PC-9 (cell line): ENCODE measurements at regions of chr12 and their contacts with region 1.

Region 1: GRCh38 chr12:104121001-104121400 is 17.0 kb downstream of the NFYB start:
- DNase-seq: peak in 1 of 2 experiments; percentile 81
- H3K4me3 ChIP-seq: no peak overlapping the region
- H3K27ac ChIP-seq: peak overlapping the region; percentile 27; the same call in 1 of the 2 replicates
- H3K4me1 ChIP-seq: peaks cover 24% of the 10 kb centered on the region
- H3K27me3 ChIP-seq: no peaks in the 10 kb centered on the region
- CTCF ChIP-seq: no peak

Region 2: GRCh38 chr12:103771466-103771865 is 349.5 kb before region 1 on chr12:
- CTCF ChIA-PET with region 1: interaction called, 8 read pairs
- POLR2A ChIA-PET with region 1: no interaction called
- intact Hi-C with region 1: loop called (anchors 10 kb)
- DNase-seq: peak in 1 of 2 experiments; percentile 49
- H3K4me3 ChIP-seq: no peak overlapping the region
- H3K27ac ChIP-seq: no peak overlapping the region
- H3K4me1 ChIP-seq: no peaks in the 10 kb centered on the region
- H3K27me3 ChIP-seq: no peaks in the 10 kb centered on the region
- CTCF ChIP-seq: peak; percentile 73

Region 3: GRCh38 chr12:103960616-103961227 is 160.3 kb before region 1 on chr12:
- CTCF ChIA-PET with region 1: no interaction called
- POLR2A ChIA-PET with region 1: no interaction called
- intact Hi-C with region 1: no loop called
- DNase-seq: no peak
- H3K4me3 ChIP-seq: no peak overlapping the region
- H3K27ac ChIP-seq: no peak overlapping the region
- H3K4me1 ChIP-seq: peaks cover 20% of the 10 kb centered on the region
- H3K27me3 ChIP-seq: no peaks in the 10 kb centered on the region
- CTCF ChIP-seq: no peak

Region 4: DNA sequence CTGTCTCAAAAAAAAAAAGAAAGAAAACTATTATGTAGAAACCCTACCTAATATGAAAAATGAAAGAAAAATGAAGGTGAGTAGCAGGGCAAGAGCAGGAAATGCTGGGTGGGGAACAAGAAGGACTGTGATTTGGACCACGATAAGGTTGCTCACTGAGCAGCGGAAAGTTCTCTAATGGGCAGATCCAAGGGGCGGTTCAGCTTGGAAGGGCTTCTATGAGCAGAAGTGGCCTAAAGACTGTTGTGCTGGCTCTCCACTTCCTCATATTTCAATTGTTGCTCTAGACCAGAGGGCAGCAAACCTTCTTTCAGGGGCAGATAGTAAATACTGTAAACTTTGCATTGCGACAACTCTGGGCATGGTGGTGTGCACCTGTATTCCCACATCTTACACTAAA is 33.3 kb after region 1 on chr12:
- CTCF ChIA-PET with region 1: no interaction called
- POLR2A ChIA-PET with region 1: no interaction called
- intact Hi-C with region 1: no loop called
- DNase-seq: peak; percentile 29 to 70
- H3K4me3 ChIP-seq: no peak overlapping the region
- H3K27ac ChIP-seq: peak overlapping the region; percentile 14; the same call in 1 of the 2 replicates
- H3K4me1 ChIP-seq: peaks cover 14% of the 10 kb centered on the region
- H3K27me3 ChIP-seq: no peaks in the 10 kb centered on the region
- CTCF ChIP-seq: no peak

Region 5: GRCh38 chr12:104286538-104287482 is 165.8 kb after region 1 on chr12:
- CTCF ChIA-PET with region 1: no interaction called
- POLR2A ChIA-PET with region 1: no interaction called
- intact Hi-C with region 1: loop called (anchors 5 kb)
- DNase-seq: peak; percentile 95 to 96
- H3K4me3 ChIP-seq: peak overlapping the region; percentile 96
- H3K27ac ChIP-seq: peak overlapping the region; percentile 99
- H3K4me1 ChIP-seq: peaks cover 43% of the 10 kb centered on the region
- H3K27me3 ChIP-seq: no peaks in the 10 kb centered on the region
- CTCF ChIP-seq: no peak